Esophagus squamous epithelium (tissue), 5 donors: ENCODE measurements at regions of chr18 and their contacts with region 1.

Region 1: GRCh38 chr18:23629444-23629946 is 33.2 kb downstream of the ANKRD29 start:
- DNase-seq: no peak
- H3K4me3 ChIP-seq: no peak overlapping the region
- H3K27ac ChIP-seq: no peak overlapping the region
- H3K4me1 ChIP-seq: peaks cover 0 to 21% (median 0%) of the 10 kb centered on the region in 3 donors
- H3K27me3 ChIP-seq: no peaks in the 10 kb centered on the region
- CTCF ChIP-seq: no peak
- POLR2A ChIP-seq: no peak

Region 2: GRCh38 chr18:23805898-23806297 is 176.4 kb after region 1 on chr18:
- intact Hi-C with region 1: loop called (anchors 10 kb)
- DNase-seq: no peak
- H3K4me3 ChIP-seq: no peak overlapping the region
- H3K27ac ChIP-seq: peak overlapping the region in 1 of 4 donors; percentile 18
- H3K4me1 ChIP-seq: peaks cover 0 to 6% (median 0%) of the 10 kb centered on the region in 3 donors
- H3K27me3 ChIP-seq: no peaks in the 10 kb centered on the region
- CTCF ChIP-seq: no peak
- POLR2A ChIP-seq: no peak

Region 3: GRCh38 chr18:23924813-23925212 is 295.3 kb after region 1 on chr18:
- intact Hi-C with region 1: loop called (anchors 10 kb)
- DNase-seq: no peak
- H3K4me3 ChIP-seq: no peak overlapping the region
- H3K27ac ChIP-seq: no peak overlapping the region
- H3K4me1 ChIP-seq: no peaks in the 10 kb centered on the region
- H3K27me3 ChIP-seq: no peaks in the 10 kb centered on the region
- CTCF ChIP-seq: no peak
- POLR2A ChIP-seq: no peak